Right ventricle myocardium inferior (tissue), 1 donor: ENCODE measurements at regions of chr19 and their contacts with region 1.

Region 1: DNA sequence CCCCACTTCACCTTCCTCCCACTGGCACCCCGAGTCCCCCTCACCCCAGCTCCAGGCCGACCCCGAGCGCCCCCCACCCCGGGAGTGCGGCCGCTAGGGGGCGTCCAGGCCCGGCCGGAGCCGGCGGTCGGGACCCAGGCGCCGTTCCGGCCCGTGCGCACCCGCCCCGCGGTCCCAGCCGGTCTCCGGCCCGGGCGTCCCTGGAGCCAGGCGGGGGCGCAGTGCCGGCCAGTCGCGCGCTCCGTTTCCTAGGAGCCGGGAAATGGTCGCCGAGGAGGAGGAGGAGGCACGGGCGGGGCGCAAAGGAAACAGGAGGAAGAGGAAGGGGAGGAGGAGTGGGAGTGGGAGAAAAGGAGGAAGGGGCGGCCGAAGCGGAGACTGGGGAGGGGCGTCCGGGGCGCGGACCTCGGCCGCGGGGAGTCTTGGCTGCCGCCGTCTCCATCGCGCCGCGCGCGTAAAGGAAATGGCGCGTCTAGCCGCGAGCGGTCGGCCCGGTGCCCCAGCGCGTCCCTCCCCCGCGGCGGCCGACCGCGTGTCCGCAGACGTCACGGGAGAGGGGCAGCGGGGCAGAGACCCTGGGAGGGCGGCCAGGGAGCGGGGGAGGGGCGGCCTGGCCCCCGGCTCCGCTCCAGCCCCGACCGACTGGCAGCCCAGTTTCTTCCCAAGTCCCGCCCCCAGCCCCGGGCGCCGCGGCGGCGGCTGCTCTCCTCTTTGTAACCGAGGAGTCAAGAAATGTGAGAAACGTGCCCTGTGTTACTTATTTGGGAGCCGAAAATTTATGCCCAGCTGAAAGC is 1.1 kb upstream of the KCTD15 start:
- DNase-seq: peak; percentile 94
- ATAC-seq: peak; percentile 88

Region 2: DNA sequence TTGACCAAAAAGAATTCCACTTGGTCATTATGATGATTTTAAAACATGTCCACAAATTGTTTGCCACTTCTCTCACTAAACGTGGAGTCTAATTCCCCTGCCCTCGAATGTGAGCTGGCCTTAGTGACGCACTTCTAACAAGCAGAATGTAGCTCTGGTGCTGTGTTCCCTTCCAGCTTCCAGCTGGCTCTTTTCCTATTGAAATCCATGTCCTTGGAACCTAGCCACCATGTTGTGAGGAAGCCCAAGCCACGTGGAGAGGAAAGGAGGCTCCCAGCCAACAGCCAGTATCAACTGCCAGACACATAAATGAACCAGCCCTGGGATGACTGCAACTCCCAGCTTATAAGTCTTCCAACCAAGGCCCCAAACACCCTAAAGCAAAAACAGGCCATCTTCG is 469.6 kb before region 1 on chr19:
- intact Hi-C with region 1: no loop called
- DNase-seq: no peak
- ATAC-seq: peak; percentile 75

Region 3: GRCh38 chr19:33819880-33820781 is 24.6 kb after region 1 on chr19:
- intact Hi-C with region 1: loop called (anchors 2 kb)
- DNase-seq: peak; percentile 93
- ATAC-seq: peak; percentile 88

Region 4: GRCh38 chr19:33883859-33884519 is 88.4 kb after region 1 on chr19:
- intact Hi-C with region 1: loop called (anchors 1 kb)
- DNase-seq: no peak
- ATAC-seq: peak; percentile 23

Region 5: DNA sequence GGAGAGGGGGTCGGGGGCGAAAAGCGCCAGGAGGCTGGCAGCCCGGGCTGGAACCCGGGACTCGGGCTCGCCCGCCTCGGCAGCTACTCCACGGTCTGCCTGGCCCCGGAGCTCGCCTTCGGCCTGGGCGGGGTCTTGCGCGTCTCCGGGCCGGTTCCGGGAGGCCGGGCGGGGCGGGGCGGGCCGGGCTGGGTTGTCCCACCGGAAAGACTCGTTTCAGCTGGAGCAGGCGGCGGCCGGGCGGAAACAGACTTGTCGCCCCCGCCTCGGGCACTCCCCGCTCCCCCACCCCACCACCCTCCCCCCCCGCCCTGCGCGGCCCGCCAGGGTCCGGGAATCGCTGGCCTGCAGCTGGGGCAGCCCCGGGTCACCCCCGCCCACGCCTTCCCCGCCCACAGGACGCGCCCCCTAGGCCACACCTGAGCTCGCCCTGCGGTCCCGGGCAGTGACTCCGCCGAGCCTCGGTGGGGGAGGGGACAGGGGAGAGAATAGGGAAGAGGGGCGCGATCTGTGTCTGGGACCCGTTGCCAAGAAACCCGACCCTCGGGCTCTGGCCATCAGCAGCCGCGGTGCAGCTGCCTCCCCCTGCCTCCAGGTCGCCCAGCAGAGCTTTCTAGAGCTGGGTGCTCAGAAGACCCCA is 110.5 kb after region 1 on chr19:
- intact Hi-C with region 1: loop called (anchors 1 kb)
- DNase-seq: peak; percentile 85
- ATAC-seq: peak; percentile 90

Region 6: DNA sequence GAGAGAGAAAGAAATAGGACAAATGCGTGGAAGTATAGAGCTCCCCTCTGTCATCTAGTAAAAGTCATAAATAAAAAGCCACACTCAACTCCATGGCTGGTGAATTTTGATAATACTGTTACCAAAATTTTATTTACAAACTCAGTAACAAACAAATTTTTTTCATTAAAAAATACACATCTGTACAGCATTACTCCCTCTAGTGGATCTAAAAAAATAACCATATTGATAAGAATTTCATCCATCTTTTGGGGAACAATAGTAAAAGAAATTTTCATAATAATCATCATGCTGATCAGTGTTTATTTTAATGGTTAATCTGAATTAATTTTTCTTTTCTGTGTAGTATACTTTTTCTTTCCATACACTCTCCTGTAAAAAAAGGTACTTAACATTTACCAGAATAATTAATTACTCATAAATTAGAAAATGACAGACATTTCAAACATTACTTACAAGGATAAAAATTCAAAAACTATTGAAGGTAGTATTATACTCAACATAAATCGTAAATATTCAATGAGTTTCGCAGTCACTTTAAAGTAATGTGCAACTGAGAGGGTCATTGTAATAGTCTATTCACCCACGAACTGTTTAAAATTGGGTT is 203.3 kb after region 1 on chr19:
- intact Hi-C with region 1: loop called (anchors 2 kb)
- DNase-seq: no peak
- ATAC-seq: no peak

Region 7: DNA sequence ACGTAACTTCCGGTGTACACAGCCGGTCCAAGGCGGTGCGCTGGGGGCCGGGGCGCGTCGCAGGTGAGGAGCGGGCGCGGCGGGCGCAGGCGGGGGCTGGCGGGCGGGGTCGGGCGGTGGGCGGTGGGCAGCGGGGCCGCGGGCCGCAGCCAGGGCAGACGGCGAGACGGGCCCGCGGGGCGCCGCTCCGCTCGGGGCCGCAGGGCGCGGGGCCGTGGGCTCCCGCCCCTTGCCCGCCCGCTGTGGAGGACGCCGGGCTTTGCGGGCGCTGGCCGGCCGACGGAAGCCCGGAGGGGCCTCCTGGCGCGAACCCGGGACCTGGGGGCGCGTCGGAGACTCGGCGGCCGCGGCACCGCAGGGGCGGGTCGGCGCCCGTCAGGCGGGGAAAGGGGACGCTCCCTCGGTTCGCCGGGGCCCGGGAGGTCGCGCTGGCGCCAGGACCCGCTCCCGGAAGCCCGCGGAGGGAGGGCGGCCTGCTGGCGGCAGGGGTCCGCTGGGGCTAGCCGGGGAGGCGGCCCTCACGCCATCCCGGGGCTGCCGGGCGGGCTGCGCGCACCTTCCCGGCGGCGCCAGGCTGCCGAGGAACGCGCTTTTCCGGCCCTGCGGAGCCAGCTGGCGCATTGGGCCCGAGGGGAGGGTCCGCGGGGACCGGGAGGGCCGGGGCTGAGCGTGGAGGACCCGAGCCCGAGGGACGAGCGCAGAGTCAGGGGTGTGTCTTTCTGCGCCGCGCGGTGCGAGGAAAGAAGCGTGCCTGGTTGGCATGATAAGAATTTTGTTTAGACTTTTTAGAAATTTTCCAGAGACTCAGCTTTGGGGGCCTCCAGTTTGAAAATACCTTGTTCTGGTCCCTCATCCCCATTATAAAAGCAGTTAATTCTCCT is 459.2 kb after region 1 on chr19 and contains the start of gene GARRE1:
- intact Hi-C with region 1: no loop called
- DNase-seq: peak; percentile 74
- ATAC-seq: peak; percentile 73
- total RNA-seq, gene GARRE1: 16.3 TPM